HCT116 (cell line): ENCODE measurements at regions of chr16 and their contacts with region 1.

Region 1: DNA sequence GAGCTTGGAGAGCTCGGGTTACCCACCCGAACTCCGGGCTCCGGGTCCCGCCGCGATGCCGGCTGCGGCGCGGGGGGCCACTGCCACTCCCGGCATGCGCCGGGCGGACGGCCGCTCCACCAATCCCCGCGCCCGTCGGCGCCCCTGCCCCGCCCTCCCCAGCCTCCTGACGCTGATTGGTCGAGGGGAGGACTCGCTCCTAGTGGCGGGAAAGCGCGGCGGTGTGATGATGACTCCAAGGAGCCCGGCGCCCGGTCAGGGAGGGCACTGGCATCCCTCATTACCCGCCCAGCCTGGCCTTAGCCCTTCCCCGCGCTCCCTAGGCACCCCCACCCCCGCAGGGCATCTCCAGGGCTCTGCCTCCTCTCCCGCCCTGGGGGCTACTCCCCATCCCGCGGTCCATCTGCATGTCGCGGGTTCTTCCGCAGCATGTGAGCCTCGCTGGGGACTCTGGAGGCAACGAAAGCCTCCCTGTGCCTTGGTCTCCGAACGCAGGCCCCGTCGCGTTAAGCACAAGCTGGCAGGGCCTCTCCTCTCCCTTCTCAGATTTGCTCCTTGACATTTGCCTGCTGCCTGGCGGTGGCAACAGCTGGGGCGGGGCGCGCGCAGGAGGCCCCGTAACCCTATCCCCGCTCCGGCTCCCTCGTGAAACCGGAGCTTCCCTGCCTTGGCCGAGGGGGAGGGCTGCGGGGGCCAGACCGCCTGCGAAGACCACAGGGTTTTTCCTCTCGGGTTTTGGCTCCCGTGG is 1.7 kb downstream of the ATP2A1 start:
- DNase-seq: peak; percentile 61
- ATAC-seq: peak; percentile 93
- H3K4me3 ChIP-seq: peak overlapping the region; percentile 74 to 93
- H3K27ac ChIP-seq: peak overlapping the region; percentile 44
- H3K4me1 ChIP-seq: peaks cover 5 to 17% of the 10 kb centered on the region in 2 experiments; a peak in 2 of 4 replicates
- H3K27me3 ChIP-seq: no peaks in the 10 kb centered on the region
- CTCF ChIP-seq: no peak
- POLR2A ChIP-seq: no peak
- RAD21 ChIP-seq: no peak

Region 2: DNA sequence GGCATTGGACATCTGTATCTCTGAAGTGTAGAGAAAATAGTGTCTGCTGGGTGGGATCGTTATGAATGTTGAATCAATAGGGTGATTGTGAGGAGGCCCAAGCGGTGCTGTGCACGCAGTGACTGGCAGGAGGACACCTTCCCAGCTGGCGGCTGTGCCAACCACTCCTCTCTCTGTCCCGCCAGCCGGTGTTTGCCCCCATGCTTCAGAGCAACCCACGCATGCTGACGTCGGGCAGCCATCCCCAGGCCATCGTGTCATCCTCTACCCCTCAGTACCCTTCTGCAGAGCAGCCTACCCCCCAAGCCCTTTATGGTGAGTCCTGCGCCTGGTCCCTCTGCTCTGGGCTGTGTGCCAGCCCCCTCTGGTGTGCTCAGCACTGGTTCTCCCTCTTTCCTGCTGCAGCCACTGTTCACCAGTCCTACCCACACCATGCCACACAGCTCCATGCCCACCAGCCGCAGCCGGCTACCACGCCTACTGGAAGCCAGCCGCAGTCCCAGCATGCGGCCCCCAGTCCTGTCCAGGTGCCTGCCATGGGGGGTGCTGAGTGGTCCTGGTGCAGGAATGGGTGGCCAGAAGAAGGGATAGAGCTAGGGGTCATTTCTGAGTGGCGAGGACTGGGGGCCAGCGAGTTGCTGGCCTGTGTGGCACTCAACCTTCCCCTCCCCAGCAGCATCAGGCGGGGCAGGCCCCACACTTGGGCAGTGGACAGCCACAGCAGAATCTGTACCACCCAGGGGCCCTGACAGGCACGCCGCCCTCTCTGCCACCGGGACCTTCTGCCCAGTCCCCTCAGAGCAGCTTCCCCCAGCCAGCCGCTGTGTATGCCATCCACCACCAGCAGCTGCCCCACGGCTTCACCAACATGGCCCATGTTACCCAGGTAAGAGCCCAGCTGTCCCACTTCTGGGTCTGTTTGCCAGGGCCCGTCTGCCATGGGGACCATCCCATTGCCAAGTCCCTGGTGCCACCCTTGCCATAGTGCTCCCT is 44.8 kb before region 1 on chr16:
- CTCF ChIA-PET with region 1: no interaction called
- POLR2A ChIA-PET with region 1: no interaction called
- RAD21 ChIA-PET with region 1: no interaction called
- intact Hi-C with region 1: no loop called
- DNase-seq: no peak
- ATAC-seq: no peak
- H3K4me3 ChIP-seq: no peak overlapping the region
- H3K27ac ChIP-seq: no peak overlapping the region; the same call in 1 of the 2 replicates
- H3K4me1 ChIP-seq: no peaks in the 10 kb centered on the region
- H3K27me3 ChIP-seq: no peaks in the 10 kb centered on the region
- CTCF ChIP-seq: no peak
- POLR2A ChIP-seq: no peak
- RAD21 ChIP-seq: no peak

Region 3: DNA sequence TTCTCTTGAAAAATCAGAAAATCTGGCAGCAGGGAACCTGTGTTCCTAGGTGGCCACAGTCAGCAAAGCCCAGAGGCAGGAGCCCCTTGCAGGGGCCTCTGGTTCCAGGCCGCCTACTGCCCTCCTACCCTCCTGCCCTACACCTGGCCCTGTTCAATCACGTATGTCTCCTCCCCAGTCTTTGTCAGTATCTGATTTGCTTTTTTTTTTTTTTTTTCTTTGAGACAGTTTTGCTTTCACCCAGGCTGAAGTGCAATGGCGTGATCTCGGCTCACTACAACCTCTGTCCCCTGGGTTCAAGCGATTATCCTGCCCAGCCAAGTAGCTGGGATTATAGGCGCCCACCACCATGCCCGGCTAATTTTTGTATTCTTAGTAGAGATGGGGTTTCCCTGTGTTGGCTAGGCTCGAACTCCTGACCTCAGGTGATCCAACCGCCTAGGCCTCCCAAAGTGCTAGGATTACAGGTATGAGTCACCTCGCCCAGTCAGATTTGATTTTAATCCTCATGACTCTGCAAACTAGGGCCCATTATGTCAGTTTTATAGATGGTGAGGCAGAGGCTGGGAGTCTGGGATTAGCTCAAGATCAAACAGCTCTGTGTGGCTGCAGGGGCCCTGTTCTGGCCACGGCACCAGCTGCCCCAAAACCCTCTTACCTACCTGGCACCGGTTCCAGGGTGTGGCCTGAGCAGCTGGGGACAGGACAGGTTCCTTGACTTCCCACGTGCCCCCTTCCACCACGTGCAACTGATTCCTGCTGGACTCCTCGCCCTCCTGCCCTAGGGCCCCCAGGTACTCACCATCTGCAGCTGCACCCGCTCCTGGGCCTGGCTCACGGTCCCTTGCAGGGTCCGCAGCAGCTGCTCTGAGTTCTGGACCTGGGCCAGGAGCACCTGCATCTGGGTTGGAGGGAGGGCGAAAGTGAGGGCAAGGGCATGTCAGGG is 30.3 kb after region 1 on chr16:
- CTCF ChIA-PET with region 1: no interaction called
- POLR2A ChIA-PET with region 1: no interaction called
- RAD21 ChIA-PET with region 1: no interaction called
- intact Hi-C with region 1: loop called (anchors 5 kb)
- DNase-seq: peak; percentile 44
- ATAC-seq: peak; percentile 80
- H3K4me3 ChIP-seq: 0 out of 4 replicates have a peak overlapping the region, but pooled peaks of 1 of the 2 experiments have one; percentile 0
- H3K27ac ChIP-seq: peak overlapping the region; percentile 85
- H3K4me1 ChIP-seq: peaks cover 20 to 35% of the 10 kb centered on the region in 2 experiments
- H3K27me3 ChIP-seq: no peaks in the 10 kb centered on the region
- CTCF ChIP-seq: no peak
- POLR2A ChIP-seq: no peak
- RAD21 ChIP-seq: no peak